HepG2 (cell line): ENCODE measurements at regions of chr20 and their contacts with region 1.

Region 1: GRCh38 chr20:48405669-48406308 is 422.0 kb downstream of the PREX1 start:
- DNase-seq: peak; percentile 56
- ATAC-seq: peak; percentile 70
- H3K4me3 ChIP-seq: no peak overlapping the region
- H3K27ac ChIP-seq: no peak overlapping the region
- H3K4me1 ChIP-seq: peaks cover 65% of the 10 kb centered on the region
- H3K27me3 ChIP-seq: no peaks in the 10 kb centered on the region; a peak in 2 of 5 replicates
- CTCF ChIP-seq: peak; percentile 54; the same call in 1 of the 2 replicates
- EP300 ChIP-seq: no peak
- POLR2A ChIP-seq: no peak
- RAD21 ChIP-seq: peak; percentile 47; the same call in 1 of the 2 replicates

Region 2: GRCh38 chr20:48359697-48360336 is 46.0 kb before region 1 on chr20:
- CTCF ChIA-PET with region 1: no interaction called
- POLR2A ChIA-PET with region 1: no interaction called
- in situ Hi-C with region 1: no loop called
- intact Hi-C with region 1: loop called (anchors 5 kb)
- DNase-seq: peak; percentile 54
- ATAC-seq: peak; percentile 72
- H3K4me3 ChIP-seq: peak overlapping the region; percentile 57 to 71 (median 66)
- H3K27ac ChIP-seq: no peak overlapping the region
- H3K4me1 ChIP-seq: peaks cover 55% of the 10 kb centered on the region
- H3K27me3 ChIP-seq: no peaks in the 10 kb centered on the region
- CTCF ChIP-seq: no peak
- EP300 ChIP-seq: no peak
- POLR2A ChIP-seq: 0 out of 4 replicates have a peak, but pooled peaks of 1 of the 2 experiments have one; percentile 54
- RAD21 ChIP-seq: no peak

Region 3: DNA sequence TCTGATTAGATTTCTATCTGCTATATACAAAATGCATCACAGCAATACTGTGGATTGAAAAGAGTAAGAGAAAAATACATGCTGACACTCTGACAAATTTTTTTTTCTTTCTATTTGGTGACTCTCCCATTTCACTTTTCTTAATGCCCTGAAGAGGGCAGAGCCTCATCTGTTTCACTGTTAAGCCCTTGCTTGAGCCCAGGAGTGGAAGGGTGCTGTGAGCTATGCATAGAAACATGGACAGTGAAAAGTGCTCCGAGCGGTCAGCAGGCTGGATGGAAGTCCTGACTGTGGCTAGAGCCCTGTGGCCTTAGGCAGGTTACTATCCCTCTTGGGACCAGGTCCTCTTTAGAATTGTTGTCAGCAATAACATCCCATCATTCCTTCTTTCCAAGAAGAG is 622.9 kb after region 1 on chr20:
- CTCF ChIA-PET with region 1: no interaction called
- POLR2A ChIA-PET with region 1: no interaction called
- in situ Hi-C with region 1: no loop called
- intact Hi-C with region 1: no loop called
- DNase-seq: peak; percentile 58
- ATAC-seq: peak; percentile 84
- H3K4me3 ChIP-seq: no peak overlapping the region
- H3K27ac ChIP-seq: no peak overlapping the region
- H3K4me1 ChIP-seq: no peaks in the 10 kb centered on the region
- H3K27me3 ChIP-seq: no peaks in the 10 kb centered on the region
- CTCF ChIP-seq: peak; percentile 58
- EP300 ChIP-seq: no peak
- POLR2A ChIP-seq: no peak
- RAD21 ChIP-seq: peak; percentile 29; the same call in 1 of the 2 replicates